Activated naive CD4-positive, alpha-beta T cell treated with anti-CD3 and anti-CD28 coated beads for 36 hours (primary cell): ENCODE measurements at regions of chr14 and their contacts with region 1.

Region 1: GRCh38 chr14:69637503-69638030 is 26.2 kb downstream of the SUSD6 start:
- DNase-seq: peak; percentile 31
- H3K4me3 Mint-ChIP-seq: peak overlapping the region; percentile 36
- H3K27ac Mint-ChIP-seq: peak overlapping the region; percentile 96
- H3K4me1 Mint-ChIP-seq: peaks cover 91% of the 10 kb centered on the region
- H3K27me3 Mint-ChIP-seq: no peaks in the 10 kb centered on the region

Region 2: GRCh38 chr14:69611201-69612011 is 26.2 kb before region 1 on chr14 and contains the start of gene SUSD6:
- CTCF ChIA-PET with region 1: interaction called, 11 read pairs
- intact Hi-C with region 1: loop called (anchors 1 kb)
- DNase-seq: peak; percentile 88
- H3K4me3 Mint-ChIP-seq: peak within 1 kb of the TSS; percentile 92
- H3K27ac Mint-ChIP-seq: peak within 1 kb of the TSS; percentile 91
- H3K4me1 Mint-ChIP-seq: peaks cover 53% of the 10 kb centered on the region
- H3K27me3 Mint-ChIP-seq: no peaks in the 10 kb centered on the region
- total RNA-seq, gene SUSD6: 66.6 to 69.7 TPM

Region 3: DNA sequence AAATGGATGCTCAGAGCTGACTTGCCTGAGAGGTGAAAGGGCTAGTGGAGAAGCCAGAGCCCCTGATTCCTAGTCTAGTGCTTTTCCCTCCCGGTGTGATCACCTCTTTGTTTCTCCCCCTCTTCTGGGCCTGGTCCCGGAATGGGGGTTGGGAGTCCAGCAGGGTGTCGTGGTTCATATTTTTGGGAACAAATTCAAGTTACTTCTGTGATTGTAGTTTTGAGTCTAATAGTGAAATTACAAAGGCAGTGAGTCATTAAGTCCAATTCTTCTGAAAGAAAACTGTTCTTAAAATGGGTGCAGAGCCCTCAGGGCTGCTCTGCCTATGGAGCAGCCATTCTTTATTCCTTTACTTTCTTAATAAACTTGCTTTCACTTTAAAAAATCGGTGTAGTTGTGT is 18.6 kb before region 1 on chr14:
- CTCF ChIA-PET with region 1: interaction called, 6 read pairs
- intact Hi-C with region 1: loop called (anchors 1 kb)
- DNase-seq: no peak
- H3K4me3 Mint-ChIP-seq: peak overlapping the region; percentile 41
- H3K27ac Mint-ChIP-seq: peak overlapping the region; percentile 91
- H3K4me1 Mint-ChIP-seq: peaks cover 95% of the 10 kb centered on the region
- H3K27me3 Mint-ChIP-seq: no peaks in the 10 kb centered on the region

Region 4: GRCh38 chr14:69625299-69626131 is 12.1 kb before region 1 on chr14:
- CTCF ChIA-PET with region 1: interaction called, 4 read pairs
- intact Hi-C with region 1: loop called (anchors 1 kb)
- DNase-seq: peak; percentile 84
- H3K4me3 Mint-ChIP-seq: peak overlapping the region; percentile 54
- H3K27ac Mint-ChIP-seq: peak overlapping the region; percentile 89
- H3K4me1 Mint-ChIP-seq: peaks cover 93% of the 10 kb centered on the region
- H3K27me3 Mint-ChIP-seq: no peaks in the 10 kb centered on the region

Region 5: DNA sequence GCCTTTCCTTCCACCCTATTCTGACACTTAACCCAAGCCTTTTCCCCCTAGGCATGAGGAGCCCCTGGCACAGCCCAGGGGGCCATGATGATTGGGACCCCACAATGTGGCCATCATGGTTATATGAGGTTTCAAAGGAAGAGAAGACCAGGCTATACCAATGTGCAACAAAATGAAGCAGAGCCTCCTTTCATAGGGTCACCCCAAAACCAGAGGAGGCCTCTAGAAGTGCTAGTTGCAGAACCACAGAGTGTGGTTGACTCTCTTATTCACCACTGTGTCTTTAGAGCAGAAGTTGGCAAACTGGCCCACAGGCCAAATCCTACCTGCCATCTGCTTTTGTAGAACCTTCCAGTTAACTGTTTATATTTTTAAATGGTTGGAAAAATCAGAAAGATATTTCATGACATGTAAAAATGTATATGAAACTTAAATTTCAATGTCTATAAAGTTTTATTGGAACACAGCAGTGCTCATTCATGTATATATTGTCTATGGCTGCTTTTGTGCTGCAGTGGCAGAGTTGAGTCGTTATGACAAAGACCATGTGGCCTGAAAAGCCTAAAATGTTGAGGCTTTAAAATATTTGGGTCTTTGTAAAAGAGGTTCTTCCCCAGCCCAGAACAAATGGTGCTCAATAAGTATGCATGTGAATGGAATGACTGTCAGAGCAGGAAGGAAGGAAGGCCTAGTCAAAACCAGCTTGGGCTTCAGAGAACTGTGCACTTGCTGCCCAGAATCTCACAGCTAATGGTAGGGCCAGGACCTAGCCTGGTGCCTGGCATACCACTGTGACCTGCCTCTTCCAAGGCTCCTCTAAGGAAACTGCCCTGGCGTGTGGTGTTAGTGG is 23.0 kb after region 1 on chr14:
- CTCF ChIA-PET with region 1: no interaction called
- intact Hi-C with region 1: loop called (anchors 1 kb)
- DNase-seq: peak; percentile 72
- H3K4me3 Mint-ChIP-seq: no peak overlapping the region
- H3K27ac Mint-ChIP-seq: peak overlapping the region; percentile 68
- H3K4me1 Mint-ChIP-seq: peaks cover 92% of the 10 kb centered on the region
- H3K27me3 Mint-ChIP-seq: no peaks in the 10 kb centered on the region

Region 6: GRCh38 chr14:69685716-69686115 is 48.1 kb after region 1 on chr14:
- CTCF ChIA-PET with region 1: interaction called, 5 read pairs
- intact Hi-C with region 1: loop called (anchors 1 kb)
- DNase-seq: peak; percentile 75
- H3K4me3 Mint-ChIP-seq: peak overlapping the region; percentile 41
- H3K27ac Mint-ChIP-seq: peak overlapping the region; percentile 93
- H3K4me1 Mint-ChIP-seq: peaks cover 78% of the 10 kb centered on the region
- H3K27me3 Mint-ChIP-seq: no peaks in the 10 kb centered on the region

Region 7: DNA sequence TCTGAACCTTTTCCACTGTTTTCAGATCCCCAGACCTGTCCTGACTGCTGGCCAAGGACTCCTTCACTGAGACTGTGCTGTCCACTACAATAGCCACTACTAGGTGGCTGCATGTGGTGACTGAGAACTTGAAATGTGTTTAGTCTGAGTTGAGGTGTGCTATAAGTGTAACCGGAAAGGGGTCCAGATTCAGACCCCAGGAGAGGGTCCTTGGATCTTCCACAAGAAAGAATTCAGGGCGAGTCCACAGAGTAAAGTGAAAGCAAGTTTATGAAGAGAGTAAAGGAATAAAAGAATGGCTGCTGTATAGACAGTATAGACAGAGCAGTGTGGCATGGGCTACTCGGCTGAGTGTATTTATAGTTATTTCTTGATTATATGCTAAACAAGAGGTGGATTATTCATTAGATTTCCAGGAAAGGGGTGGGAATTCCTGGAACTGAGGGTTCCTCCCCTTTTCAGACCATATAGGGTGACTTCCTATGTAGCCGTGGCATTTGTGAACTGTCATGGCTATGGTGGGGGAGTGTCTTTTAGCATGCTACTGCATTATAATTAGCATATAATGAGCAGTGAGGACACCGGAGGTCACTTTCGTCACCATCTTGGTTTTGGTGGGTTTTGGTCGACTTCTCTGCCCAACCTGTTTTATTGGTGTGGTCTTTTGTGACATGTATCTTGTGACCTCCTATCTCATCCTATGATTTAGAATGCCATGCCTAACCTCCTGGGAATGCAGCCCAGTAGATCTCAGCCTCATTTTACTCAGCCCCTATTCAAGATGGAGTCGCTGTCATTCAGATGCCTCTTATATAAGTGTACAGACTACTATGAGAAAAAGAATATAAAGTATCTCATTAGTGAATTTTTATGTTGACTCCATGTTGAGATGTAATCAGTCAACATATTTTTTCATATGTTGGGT is 59.3 kb after region 1 on chr14:
- CTCF ChIA-PET with region 1: no interaction called
- intact Hi-C with region 1: no loop called
- DNase-seq: peak; percentile 54
- H3K4me3 Mint-ChIP-seq: peak overlapping the region; percentile 11
- H3K27ac Mint-ChIP-seq: peak overlapping the region; percentile 79
- H3K4me1 Mint-ChIP-seq: peaks cover 87% of the 10 kb centered on the region
- H3K27me3 Mint-ChIP-seq: no peaks in the 10 kb centered on the region

Region 8: GRCh38 chr14:69796797-69797500 is 159.4 kb after region 1 on chr14 and contains the start of gene SLC10A1:
- CTCF ChIA-PET with region 1: no interaction called
- intact Hi-C with region 1: no loop called
- DNase-seq: no peak
- H3K4me3 Mint-ChIP-seq: no peak within 1 kb of the TSS
- H3K27ac Mint-ChIP-seq: no peak within 1 kb of the TSS
- H3K4me1 Mint-ChIP-seq: no peaks in the 10 kb centered on the region
- H3K27me3 Mint-ChIP-seq: peaks cover 2% of the 10 kb centered on the region
- total RNA-seq, gene SLC10A1: not detected